ENCODE measurements at regions of chr12 and their contacts with region 1.

Region 1: GRCh38 chr12:56468216-56469006 is at the start of gene SPRYD4:
- DNase-seq: peak; percentile 89 to 92
- H3K4me3 ChIP-seq: peak within 1 kb of the TSS; percentile 66
- H3K4me3 Mint-ChIP-seq: peak within 1 kb of the TSS; percentile 96
- H3K27ac Mint-ChIP-seq: peak within 1 kb of the TSS; percentile 99
- H3K4me1 ChIP-seq: peaks cover 15% of the 10 kb centered on the region; the same call in 1 of the 2 replicates
- H3K4me1 Mint-ChIP-seq: peaks cover 6% of the 10 kb centered on the region
- H3K27me3 ChIP-seq: no peaks in the 10 kb centered on the region
- H3K27me3 Mint-ChIP-seq: no peaks in the 10 kb centered on the region
- CTCF ChIP-seq: peak in 1 of 2 experiments; percentile 38
- total RNA-seq, gene SPRYD4: 2.8 TPM in 2 replicates

Region 2: DNA sequence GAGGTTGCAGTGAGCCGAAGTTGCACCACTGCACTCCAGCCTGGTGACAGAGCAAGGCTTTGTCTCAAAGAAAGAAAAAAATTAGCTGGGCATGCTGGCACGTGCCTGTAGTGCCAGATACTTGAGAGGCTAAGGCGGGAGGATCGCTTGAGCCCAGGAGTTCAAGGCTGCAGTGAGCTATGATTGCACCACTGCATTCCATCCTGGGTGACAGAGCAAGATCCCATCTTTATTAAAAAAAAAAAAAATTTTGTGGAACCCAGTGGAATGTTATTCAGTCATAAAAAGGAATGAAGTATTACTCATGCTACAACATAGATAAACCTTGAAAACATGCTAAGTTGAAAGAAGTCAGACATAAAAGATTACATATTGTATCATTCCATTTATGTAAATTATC is 396.8 kb before region 1 on chr12:
- CTCF ChIA-PET with region 1: no interaction called
- POLR2A ChIA-PET with region 1: interaction called, 10 read pairs
- intact Hi-C with region 1: no loop called
- DNase-seq: no peak
- H3K4me3 ChIP-seq: no peak overlapping the region
- H3K4me3 Mint-ChIP-seq: no peak overlapping the region
- H3K27ac Mint-ChIP-seq: no peak overlapping the region
- H3K4me1 ChIP-seq: 0 out of 2 replicates have a peak, but pooled peaks cover 3% of the 10 kb centered on the region
- H3K4me1 Mint-ChIP-seq: no peaks in the 10 kb centered on the region
- H3K27me3 ChIP-seq: no peaks in the 10 kb centered on the region
- H3K27me3 Mint-ChIP-seq: no peaks in the 10 kb centered on the region
- CTCF ChIP-seq: no peak

Region 3: DNA sequence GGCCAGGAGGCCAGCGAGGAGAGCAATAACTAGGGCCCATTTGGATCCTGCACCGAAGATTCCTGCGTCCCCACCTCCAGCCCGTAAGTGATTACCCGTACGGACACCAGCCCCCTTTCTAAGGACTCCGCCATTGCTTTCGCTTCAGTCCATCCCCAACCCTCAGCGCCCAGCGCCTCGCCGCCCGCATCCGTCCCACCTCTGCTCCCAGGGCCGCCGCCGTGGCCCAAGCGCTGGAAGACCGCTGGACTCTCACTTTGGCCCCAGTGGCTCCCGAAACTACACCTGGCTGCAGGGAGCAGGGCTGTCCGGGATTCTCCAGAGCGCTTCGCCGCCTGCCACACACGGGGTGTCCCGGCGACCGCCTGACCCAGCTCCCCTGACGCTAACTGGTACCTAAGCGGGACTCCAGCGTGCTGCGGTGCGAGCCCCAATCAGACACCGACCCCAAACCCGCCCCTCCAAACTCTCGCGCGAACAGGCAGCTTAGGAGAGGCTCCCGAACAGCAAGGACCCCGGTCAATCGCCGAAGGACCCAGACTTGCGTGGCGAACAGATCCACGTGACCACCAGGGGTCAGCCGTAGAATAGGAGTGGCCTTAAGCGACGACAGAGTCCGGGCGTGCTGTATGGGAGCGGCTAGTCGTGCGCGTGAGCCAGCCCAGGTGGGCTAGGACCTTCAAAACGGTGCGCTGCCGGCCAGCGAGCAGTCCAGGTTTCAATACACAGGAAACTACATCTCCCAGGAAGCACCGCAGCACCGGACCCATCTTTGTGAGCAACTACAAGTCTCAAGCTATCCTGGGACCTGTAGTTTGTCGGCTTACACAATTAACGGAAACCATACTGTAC is 152.6 kb before region 1 on chr12 and contains the start of gene CNPY2:
- CTCF ChIA-PET with region 1: interaction called, 38 read pairs
- POLR2A ChIA-PET with region 1: interaction called, 3 read pairs
- intact Hi-C with region 1: loop called (anchors 1 kb)
- DNase-seq: peak; percentile 98 to 99
- H3K4me3 ChIP-seq: peak within 1 kb of the TSS; percentile 79
- H3K4me3 Mint-ChIP-seq: peak within 1 kb of the TSS; percentile 85
- H3K27ac Mint-ChIP-seq: peak within 1 kb of the TSS; percentile 96
- H3K4me1 ChIP-seq: peaks cover 4% of the 10 kb centered on the region; the same call in 1 of the 2 replicates
- H3K4me1 Mint-ChIP-seq: no peaks in the 10 kb centered on the region
- H3K27me3 ChIP-seq: no peaks in the 10 kb centered on the region
- H3K27me3 Mint-ChIP-seq: no peaks in the 10 kb centered on the region
- CTCF ChIP-seq: peak; percentile 22 to 27
- total RNA-seq, gene CNPY2: 204 and 208 TPM in 2 replicates

Region 4: DNA sequence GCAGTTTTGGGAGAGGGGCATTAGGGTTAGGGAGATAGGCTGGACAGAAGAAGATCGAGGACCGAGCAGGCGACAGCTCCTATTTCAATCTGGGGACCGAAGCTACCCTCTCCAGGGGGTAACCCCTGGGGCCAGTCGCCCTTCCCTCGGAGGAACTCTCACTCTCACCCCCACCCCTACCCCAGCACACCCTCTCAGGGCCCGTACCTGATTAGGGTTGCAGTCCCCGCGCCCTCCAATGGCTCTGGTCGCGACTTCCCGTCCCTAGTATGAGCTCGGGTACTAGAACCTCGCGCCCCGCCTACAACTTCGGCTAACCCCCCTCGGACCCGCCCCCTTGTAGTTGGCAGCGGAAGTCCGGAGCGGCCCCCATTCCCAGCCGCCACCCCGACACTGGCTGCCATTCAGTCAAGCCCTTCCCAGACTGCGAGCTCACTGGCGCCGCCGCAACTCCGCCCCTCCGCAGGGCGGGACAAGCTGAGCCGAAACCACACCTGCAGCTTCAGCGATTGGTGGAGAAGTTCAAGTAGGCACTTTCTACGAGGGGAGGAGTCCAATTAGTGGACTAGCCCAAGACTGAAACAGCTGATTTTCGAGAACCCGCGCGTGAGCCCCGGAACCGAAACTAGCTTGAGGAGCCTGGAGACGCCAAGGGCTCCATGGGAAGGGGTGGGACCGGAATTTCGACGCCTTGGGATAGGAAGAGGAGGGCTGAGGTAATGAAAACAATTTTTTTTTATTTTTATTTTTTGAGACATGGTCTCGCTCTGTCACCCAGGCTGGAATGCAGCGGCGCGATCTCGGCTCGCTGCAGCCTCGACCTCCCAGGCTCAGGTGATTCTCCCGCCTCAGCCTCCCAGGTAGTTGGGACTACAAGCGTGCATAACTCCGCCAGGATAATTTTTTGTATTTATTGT is 108.3 kb before region 1 on chr12 and contains the start of gene STAT2:
- CTCF ChIA-PET with region 1: interaction called, 12 read pairs
- POLR2A ChIA-PET with region 1: interaction called, 11 read pairs
- intact Hi-C with region 1: loop called (anchors 1 kb)
- DNase-seq: peak; percentile 99
- H3K4me3 ChIP-seq: peak within 1 kb of the TSS; percentile 77
- H3K4me3 Mint-ChIP-seq: peak within 1 kb of the TSS; percentile 90
- H3K27ac Mint-ChIP-seq: peak within 1 kb of the TSS; percentile 94
- H3K4me1 ChIP-seq: 0 out of 2 replicates have a peak, but pooled peaks cover 3% of the 10 kb centered on the region
- H3K4me1 Mint-ChIP-seq: peaks cover 12% of the 10 kb centered on the region
- H3K27me3 ChIP-seq: no peaks in the 10 kb centered on the region
- H3K27me3 Mint-ChIP-seq: no peaks in the 10 kb centered on the region
- CTCF ChIP-seq: no peak
- total RNA-seq, gene STAT2: 76.7 and 79.5 TPM in 2 replicates

Region 5: DNA sequence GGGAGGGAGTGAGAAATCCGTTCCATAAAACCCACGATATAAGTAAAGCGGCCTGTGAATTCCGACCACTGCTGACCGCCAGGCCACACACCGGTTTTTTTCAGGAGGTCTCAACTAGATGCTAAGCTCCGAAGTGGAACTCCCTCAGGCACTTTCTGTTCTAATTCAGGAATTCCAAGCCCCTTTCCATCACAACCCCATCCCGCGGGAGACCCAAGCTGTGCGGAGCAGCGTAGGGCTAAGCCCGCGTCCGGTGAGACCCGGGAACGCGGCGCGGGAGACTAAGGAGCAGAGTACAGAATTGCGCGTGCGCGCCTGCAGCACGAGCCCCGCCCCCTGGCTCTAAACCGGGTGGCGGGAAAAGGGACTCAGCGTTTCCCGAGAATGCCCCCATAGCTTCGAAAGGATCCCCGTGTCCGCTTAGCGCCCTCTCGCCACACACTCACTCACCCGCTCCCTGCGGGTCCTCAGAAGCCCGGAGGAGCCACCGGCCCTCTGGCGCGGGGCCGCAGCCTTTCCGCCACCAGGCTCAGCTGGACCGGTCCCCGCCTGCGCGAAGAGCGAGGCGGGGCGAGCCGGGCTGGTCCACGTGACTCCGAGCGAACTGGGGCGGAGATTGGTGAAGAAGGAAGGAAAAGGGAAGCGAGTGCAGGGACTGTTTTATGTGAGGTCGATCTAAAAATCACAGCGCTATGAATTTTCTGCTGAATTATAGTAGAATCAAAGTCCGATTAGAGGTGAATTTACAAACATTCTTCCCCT is 19.4 kb before region 1 on chr12 and contains the start of gene TIMELESS:
- CTCF ChIA-PET with region 1: interaction called, 12 read pairs
- POLR2A ChIA-PET with region 1: interaction called, 3 read pairs
- intact Hi-C with region 1: loop called (anchors 2 kb)
- DNase-seq: peak; percentile 85 to 92
- H3K4me3 ChIP-seq: peak within 1 kb of the TSS; percentile 65
- H3K4me3 Mint-ChIP-seq: peak within 1 kb of the TSS; percentile 83
- H3K27ac Mint-ChIP-seq: peak within 1 kb of the TSS; percentile 89
- H3K4me1 ChIP-seq: peaks cover 4% of the 10 kb centered on the region; the same call in 1 of the 2 replicates
- H3K4me1 Mint-ChIP-seq: peaks cover 16% of the 10 kb centered on the region
- H3K27me3 ChIP-seq: no peaks in the 10 kb centered on the region
- H3K27me3 Mint-ChIP-seq: no peaks in the 10 kb centered on the region
- CTCF ChIP-seq: no peak
- total RNA-seq, gene TIMELESS: 40.1 and 43.2 TPM in 2 replicates